Activated T-helper 2 cell treated with anti-CD3 and anti-CD28 coated beads, Interferon-gamma antibody, Interleukin-2, Interleukin-4, amounts not matched to agents 10 μg/mL and 5 μg/mL and 100 μg/mL, durations not matched to agents 14 hours and 24 hours and 36 hours (primary cell): ENCODE measurements at regions of chr5 and their contacts with region 1.

Region 1: GRCh38 chr5:39570403-39571027 is 145.7 kb upstream of the DAB2 start:
- DNase-seq: no peak
- H3K4me3 Mint-ChIP-seq: no peak overlapping the region
- H3K27ac Mint-ChIP-seq: no peak overlapping the region
- H3K4me1 Mint-ChIP-seq: no peaks in the 10 kb centered on the region
- H3K27me3 Mint-ChIP-seq: peaks cover 13% of the 10 kb centered on the region

Region 2: DNA sequence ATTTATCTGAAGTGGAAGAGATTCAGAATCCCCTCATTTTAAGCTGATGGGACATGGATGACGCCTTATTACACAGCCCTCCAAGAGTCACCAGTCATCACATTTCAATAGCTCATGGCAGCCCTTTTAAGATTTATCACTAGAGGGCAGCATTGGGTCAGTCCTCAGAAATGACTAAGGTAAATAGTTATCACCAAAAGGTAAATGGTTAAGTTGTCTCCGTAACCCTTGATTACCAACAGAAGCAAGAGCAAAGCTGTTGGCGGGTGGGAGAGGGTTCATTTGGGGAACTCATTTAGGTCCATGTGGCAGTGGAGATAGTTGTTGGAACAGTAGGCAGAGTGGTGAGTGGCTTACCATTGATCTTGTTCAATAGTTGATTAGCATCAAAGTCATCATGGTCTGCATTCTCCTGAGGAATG is 194.2 kb before region 1 on chr5:
- intact Hi-C with region 1: loop called (anchors 10 kb)
- DNase-seq: no peak
- H3K4me3 Mint-ChIP-seq: no peak overlapping the region
- H3K27ac Mint-ChIP-seq: no peak overlapping the region
- H3K4me1 Mint-ChIP-seq: no peaks in the 10 kb centered on the region
- H3K27me3 Mint-ChIP-seq: peaks cover 10% of the 10 kb centered on the region